ENCODE measurements at regions of chr1 and their contacts with region 1.

Region 1: DNA sequence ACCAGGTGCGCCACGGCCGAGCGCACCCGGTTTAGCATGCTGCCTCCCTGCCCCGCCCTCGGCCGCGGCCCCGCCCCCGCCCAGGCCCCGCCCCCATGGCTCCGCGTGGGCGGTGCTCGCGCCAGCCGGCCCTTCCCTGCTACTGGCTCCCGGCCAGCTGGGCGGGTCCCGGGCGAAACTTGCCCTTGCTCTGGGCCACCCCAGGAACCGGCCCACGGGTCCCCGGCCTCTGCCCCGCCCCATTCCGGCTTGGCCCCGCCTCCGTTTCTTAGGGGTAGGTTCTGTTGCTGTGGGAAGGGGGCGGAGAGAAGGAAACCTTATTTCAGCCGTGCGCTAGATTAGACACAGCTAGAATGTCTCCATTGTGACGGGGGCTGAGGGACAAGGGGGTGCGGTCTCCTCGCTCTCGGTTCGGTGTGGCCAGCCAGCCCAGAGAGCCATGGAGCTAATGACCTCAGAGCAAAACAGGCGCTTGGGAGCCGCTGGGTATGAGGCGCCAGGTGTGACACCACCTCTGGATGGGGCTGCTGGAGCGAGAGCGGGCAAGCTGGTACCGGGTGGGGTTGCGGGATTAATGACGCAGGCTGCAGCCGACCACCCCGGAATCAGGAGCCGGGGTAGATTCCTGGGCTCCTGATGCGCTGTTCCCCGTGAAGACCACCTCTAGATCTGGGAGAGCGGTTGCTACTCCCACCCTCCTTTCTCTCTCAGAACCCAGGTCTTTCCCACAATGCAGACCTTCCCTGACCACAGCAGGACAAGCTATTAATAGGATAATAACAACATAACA is at the start of gene PPM1J:
- H3K4me3 ChIP-seq: peak within 1 kb of the TSS; percentile 57
- H3K27ac ChIP-seq: no peak within 1 kb of the TSS; the same call in 1 of the 2 replicates
- H3K4me1 ChIP-seq: no peaks in the 10 kb centered on the region
- CTCF ChIP-seq: no peak

Region 2: DNA sequence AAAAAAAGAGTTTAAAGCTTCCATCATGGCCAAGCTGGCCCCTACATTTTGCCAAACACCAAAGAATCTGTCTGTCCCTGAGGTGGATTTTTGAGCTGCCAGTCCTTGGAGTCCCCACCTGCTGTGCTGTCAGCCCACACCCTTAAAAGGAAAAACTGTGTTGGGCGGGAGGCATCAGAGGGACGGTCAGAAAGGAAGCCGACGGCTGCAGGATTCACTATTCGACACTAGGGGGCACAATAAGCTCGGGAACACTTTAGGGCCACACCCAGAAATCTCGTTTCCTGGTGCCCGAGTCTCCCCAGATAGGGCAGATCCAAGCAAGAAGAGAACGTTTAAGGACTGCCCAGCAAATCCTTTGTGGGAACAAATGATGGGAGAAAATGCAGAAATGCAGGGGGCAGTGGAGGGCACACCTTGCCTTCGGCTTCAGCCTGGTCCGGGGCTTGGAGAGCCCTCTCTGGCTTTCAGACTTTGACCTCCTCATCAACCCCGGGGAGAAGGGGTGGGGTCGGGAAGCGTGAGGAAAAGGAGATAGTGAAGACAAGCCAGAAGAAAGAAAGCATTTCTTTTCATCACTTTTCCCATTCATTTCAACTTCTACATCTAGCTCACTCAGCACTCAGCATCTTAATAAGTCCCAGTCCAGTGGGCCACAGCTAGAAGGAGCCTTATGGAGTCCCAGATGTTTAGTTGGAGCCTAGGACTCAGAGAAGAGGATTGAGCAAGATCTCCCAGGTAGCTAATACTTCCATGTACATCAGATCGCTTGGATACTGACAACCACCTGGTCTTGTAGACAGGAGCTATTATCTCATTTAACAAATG is 324.5 kb before region 1 on chr1:
- CTCF ChIA-PET with region 1: interaction called, 18 read pairs
- POLR2A ChIA-PET with region 1: interaction called, 4 read pairs
- H3K4me3 ChIP-seq: peak overlapping the region; percentile 42
- H3K27ac ChIP-seq: no peak overlapping the region
- H3K4me1 ChIP-seq: peaks cover 10% of the 10 kb centered on the region
- CTCF ChIP-seq: peak; percentile 91

Region 3: DNA sequence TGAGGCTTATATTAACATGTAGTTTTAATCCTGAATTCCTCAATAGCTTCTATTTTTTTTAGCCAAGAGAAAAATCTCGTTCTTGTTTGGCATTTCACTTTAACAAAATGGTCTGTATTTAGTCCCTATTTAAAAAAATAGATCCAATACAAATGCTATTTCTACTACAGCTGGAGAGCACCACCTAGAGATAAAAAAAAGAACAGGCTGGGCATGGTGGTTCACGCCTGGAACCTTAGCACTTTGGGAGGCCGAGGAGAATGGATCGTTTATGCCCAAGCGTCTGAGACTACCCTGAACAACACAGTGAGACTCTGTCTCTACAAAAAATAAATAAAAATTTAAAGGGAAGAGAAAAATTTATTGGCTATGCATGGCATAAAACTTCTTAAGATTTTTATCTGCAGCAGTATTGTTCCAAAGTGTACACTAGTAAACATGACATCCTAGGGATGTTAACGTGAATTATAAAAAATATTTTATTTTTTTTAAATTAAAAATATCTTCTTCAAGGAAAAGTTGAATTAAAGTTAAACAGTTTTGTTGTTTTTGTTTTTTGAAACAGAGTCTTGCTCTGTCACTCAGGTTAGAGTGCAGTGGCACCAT is 100.9 kb before region 1 on chr1:
- CTCF ChIA-PET with region 1: interaction called, 10 read pairs
- POLR2A ChIA-PET with region 1: interaction called, 3 read pairs
- H3K4me3 ChIP-seq: no peak overlapping the region
- H3K27ac ChIP-seq: no peak overlapping the region
- H3K4me1 ChIP-seq: no peaks in the 10 kb centered on the region
- CTCF ChIP-seq: peak; percentile 48

Region 4: GRCh38 chr1:112727716-112728115 is 12.3 kb after region 1 on chr1:
- CTCF ChIA-PET with region 1: interaction called, 74 read pairs
- POLR2A ChIA-PET with region 1: no interaction called
- H3K4me3 ChIP-seq: no peak overlapping the region
- H3K27ac ChIP-seq: no peak overlapping the region
- H3K4me1 ChIP-seq: no peaks in the 10 kb centered on the region
- CTCF ChIP-seq: no peak

Region 5: DNA sequence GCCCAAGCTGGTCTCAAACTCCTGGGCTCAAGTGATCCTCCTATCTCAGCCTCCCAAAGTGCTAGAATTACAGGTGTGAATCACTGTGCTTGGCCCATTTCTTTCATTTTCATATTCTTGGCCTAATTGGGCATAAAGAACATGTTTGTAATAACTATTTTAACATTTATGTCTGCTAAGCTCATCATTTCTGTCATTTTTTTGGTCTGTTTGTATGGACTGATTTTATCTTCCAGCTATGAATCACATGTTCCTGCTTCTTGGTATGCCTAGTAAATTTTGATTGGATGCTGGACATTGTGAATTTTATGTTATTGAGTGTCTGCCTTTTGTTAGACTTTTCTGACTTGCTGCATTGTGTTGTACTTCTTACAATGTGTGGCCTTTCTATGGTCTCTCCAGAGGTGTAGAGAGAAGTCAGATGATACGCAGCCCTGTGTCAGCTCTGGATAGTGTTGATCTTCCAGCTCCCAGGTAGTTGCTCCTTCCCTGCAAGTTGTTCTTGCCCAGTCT is 38.7 kb after region 1 on chr1:
- CTCF ChIA-PET with region 1: interaction called, 13 read pairs
- POLR2A ChIA-PET with region 1: no interaction called
- H3K4me3 ChIP-seq: no peak overlapping the region
- H3K27ac ChIP-seq: no peak overlapping the region
- H3K4me1 ChIP-seq: no peaks in the 10 kb centered on the region
- CTCF ChIP-seq: no peak

Region 6: GRCh38 chr1:112809253-112809684 is 93.8 kb after region 1 on chr1:
- CTCF ChIA-PET with region 1: interaction called, 417 read pairs
- POLR2A ChIA-PET with region 1: interaction called, 7 read pairs
- H3K4me3 ChIP-seq: no peak overlapping the region
- H3K27ac ChIP-seq: no peak overlapping the region
- H3K4me1 ChIP-seq: no peaks in the 10 kb centered on the region
- CTCF ChIP-seq: peak; percentile 84

Region 7: GRCh38 chr1:113042285-113043143 is 327.1 kb after region 1 on chr1:
- CTCF ChIA-PET with region 1: interaction called, 68 read pairs
- POLR2A ChIA-PET with region 1: interaction called, 4 read pairs
- H3K4me3 ChIP-seq: no peak overlapping the region
- H3K27ac ChIP-seq: no peak overlapping the region
- H3K4me1 ChIP-seq: no peaks in the 10 kb centered on the region
- CTCF ChIP-seq: peak; percentile 46; the same call in 1 of the 2 replicates

Region 8: GRCh38 chr1:113178522-113178921 is 463.1 kb after region 1 on chr1:
- CTCF ChIA-PET with region 1: no interaction called
- POLR2A ChIA-PET with region 1: no interaction called
- H3K4me3 ChIP-seq: no peak overlapping the region
- H3K27ac ChIP-seq: no peak overlapping the region
- H3K4me1 ChIP-seq: no peaks in the 10 kb centered on the region
- CTCF ChIP-seq: no peak

Measured in HEK293 (cell line).